K562 (cell line): ENCODE measurements at regions of chr15 and their contacts with region 1.

Region 1: GRCh38 chr15:75523011-75523410 is 56.1 kb downstream of the PTPN9 start:
- DNase-seq: no peak
- ATAC-seq: peak; percentile 59
- H3K4me3 ChIP-seq: no peak overlapping the region
- H3K27ac ChIP-seq: no peak overlapping the region
- H3K4me1 ChIP-seq: no peaks in the 10 kb centered on the region
- H3K27me3 ChIP-seq: no peaks in the 10 kb centered on the region
- CTCF ChIP-seq: no peak
- EP300 ChIP-seq: no peak
- POLR2A ChIP-seq: no peak
- RAD21 ChIP-seq: no peak

Region 2: DNA sequence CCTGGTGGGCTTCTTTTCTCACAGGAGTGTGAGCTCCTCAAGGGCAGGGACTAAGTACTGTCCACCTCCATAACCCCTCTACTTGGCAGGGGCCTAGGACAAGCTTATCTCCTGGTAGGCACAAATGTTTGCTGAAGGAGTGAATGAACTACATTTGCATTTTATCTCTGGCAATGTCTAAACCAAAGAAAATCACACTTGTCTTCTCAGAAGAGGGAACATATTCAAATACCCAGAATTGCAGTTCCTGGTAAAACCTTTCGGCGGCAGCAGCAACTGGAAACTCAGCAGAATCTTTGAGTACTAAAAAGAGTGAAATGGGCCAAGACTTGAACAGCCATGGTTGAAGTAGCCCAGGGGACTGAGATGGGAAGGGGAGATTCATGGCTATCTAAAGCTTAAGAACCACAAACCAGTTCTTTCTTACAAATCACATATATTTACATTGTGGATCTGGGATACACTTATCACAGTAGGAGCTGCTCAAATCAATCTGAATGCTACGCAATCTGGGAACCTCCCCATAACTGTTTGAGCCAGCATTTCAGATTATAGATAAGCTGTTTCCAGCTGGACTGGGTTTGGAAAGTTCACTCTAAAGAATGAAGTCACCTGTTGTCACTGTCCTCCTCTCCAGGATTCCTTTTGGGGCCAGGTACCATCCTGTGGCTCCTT is 74.8 kb after region 1 on chr15:
- CTCF ChIA-PET with region 1: no interaction called
- POLR2A ChIA-PET with region 1: no interaction called
- in situ Hi-C with region 1: loop called (anchors 5 kb)
- intact Hi-C with region 1: no loop called
- DNase-seq: peak in 2 of 4 experiments; percentile 49 to 61
- ATAC-seq: peak; percentile 78
- H3K4me3 ChIP-seq: no peak overlapping the region
- H3K27ac ChIP-seq: no peak overlapping the region
- H3K4me1 ChIP-seq: peaks cover 4 to 15% of the 10 kb centered on the region in 2 experiments; a peak in 3 of 5 replicates
- H3K27me3 ChIP-seq: no peaks in the 10 kb centered on the region
- CTCF ChIP-seq: peak; percentile 47 to 60 (median 60); a peak in 5 of 6 replicates
- EP300 ChIP-seq: 0 out of 2 replicates have a peak, but pooled peaks have one; percentile 17
- POLR2A ChIP-seq: no peak
- RAD21 ChIP-seq: peak; percentile 32 to 54; a peak in 3 of 4 replicates

Region 3: GRCh38 chr15:75861750-75862402 is 338.9 kb after region 1 on chr15:
- CTCF ChIA-PET with region 1: no interaction called
- POLR2A ChIA-PET with region 1: no interaction called
- in situ Hi-C with region 1: no loop called
- intact Hi-C with region 1: no loop called
- DNase-seq: no peak
- ATAC-seq: 0 out of 3 replicates have a peak, but pooled peaks have one; percentile 42
- H3K4me3 ChIP-seq: no peak overlapping the region
- H3K27ac ChIP-seq: no peak overlapping the region
- H3K4me1 ChIP-seq: peaks cover 0 to 17% of the 10 kb centered on the region in 2 experiments; a peak in 2 of 5 replicates
- H3K27me3 ChIP-seq: no peaks in the 10 kb centered on the region
- CTCF ChIP-seq: no peak
- EP300 ChIP-seq: no peak
- POLR2A ChIP-seq: no peak
- RAD21 ChIP-seq: no peak